ENCODE measurements at regions of chr17 and their contacts with region 1.

Region 1: GRCh38 chr17:32486111-32486700 is 587 bp upstream of the CDK5R1 start:
- DNase-seq: peak; percentile 62 to 93 (median 81)
- H3K4me3 ChIP-seq: peak overlapping the region; percentile 24 to 83 (median 62)
- H3K27ac ChIP-seq: peak overlapping the region; percentile 71 to 99 (median 97)
- H3K27me3 ChIP-seq: no peaks in the 10 kb centered on the region
- CTCF ChIP-seq: peak in 13 of 56 donors; percentile 9 to 50 (median 15)

Region 2: GRCh38 chr17:32519228-32520103 is 33.3 kb after region 1 on chr17:
- intact Hi-C with region 1: loop called (anchors 2 kb)
- DNase-seq: peak in 4 of 10 donors; percentile 53 to 75 (median 72)
- H3K4me3 ChIP-seq: peak overlapping the region; percentile 11 to 70 (median 52)
- H3K27ac ChIP-seq: peak overlapping the region in 58 of 59 donors; percentile 10 to 93 (median 84)
- H3K27me3 ChIP-seq: no peaks in the 10 kb centered on the region
- CTCF ChIP-seq: no peak

Region 3: GRCh38 chr17:32627239-32627996 is 141.2 kb after region 1 on chr17:
- intact Hi-C with region 1: loop called (anchors 1 to 10 kb)
- DNase-seq: peak; percentile 48 to 91 (median 73)
- H3K4me3 ChIP-seq: peak overlapping the region in 58 of 59 donors; percentile 5 to 64 (median 40)
- H3K27ac ChIP-seq: peak overlapping the region in 58 of 59 donors; percentile 22 to 95 (median 80)
- H3K27me3 ChIP-seq: no peaks in the 10 kb centered on the region
- CTCF ChIP-seq: peak in 19 of 56 donors; percentile 3 to 40 (median 15)

Region 4: DNA sequence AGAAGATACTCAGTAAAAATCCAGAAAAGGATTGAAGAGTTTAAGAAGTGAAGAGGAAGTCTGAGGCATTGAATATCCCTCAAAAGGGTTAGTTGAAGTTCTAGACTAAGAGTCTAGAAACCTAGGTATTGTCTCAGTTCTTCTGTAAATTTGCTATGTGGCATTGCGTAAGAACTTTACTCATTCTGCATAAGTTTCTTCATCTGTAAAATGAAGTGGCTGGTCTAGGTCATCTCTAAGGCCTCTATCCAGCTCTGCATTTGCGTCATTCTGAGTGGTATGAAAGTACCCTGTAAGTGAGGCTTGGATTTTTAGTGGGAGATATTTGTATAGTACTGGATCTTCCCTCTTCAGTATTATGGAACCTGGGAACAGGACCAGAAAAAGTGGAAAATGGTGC is 260.5 kb after region 1 on chr17:
- intact Hi-C with region 1: loop called in 1 of 2 experiments (anchors 5 kb)
- DNase-seq: no peak
- H3K4me3 ChIP-seq: no peak overlapping the region
- H3K27ac ChIP-seq: no peak overlapping the region
- H3K27me3 ChIP-seq: no peaks in the 10 kb centered on the region
- CTCF ChIP-seq: no peak

Region 5: DNA sequence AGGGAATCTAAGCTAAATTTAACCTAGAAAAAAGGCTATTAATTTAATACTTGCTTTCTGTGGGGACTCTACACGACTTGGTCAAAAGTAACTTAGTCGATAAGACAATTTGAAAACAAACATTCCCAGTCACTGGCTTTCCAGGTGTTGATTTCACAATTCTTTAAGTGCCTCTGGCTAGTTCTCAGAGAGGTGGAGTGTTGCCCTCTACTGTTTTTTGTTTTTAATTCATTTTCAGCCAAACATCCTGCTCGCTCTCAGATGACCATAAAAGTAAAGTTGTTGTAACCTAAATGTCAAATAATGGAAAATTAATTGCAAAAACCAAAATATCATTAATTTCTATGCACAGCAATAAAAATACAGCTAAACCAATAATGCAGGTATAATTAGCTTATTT is 283.6 kb after region 1 on chr17:
- intact Hi-C with region 1: loop called in 1 of 2 experiments (anchors 5 kb)
- DNase-seq: no peak
- H3K4me3 ChIP-seq: no peak overlapping the region
- H3K27ac ChIP-seq: no peak overlapping the region
- H3K27me3 ChIP-seq: no peaks in the 10 kb centered on the region
- CTCF ChIP-seq: peak in 27 of 56 donors; percentile 7 to 54 (median 29)

Region 6: GRCh38 chr17:32936894-32937500 is 450.8 kb after region 1 on chr17:
- intact Hi-C with region 1: loop called in 1 of 2 experiments (anchors 10 kb)
- DNase-seq: peak; percentile 43 to 75 (median 58)
- H3K4me3 ChIP-seq: peak overlapping the region in 5 of 59 donors; percentile 5 to 25 (median 21)
- H3K27ac ChIP-seq: peak overlapping the region; percentile 3 to 99 (median 86)
- H3K27me3 ChIP-seq: peaks cover 0 to 11% (median 0%) of the 10 kb centered on the region in 45 donors
- CTCF ChIP-seq: peak; percentile 67 to 91 (median 80)